Activated CD4-positive, alpha-beta T cell treated with anti-CD3 and anti-CD28 coated beads for 36 hours (primary cell): ENCODE measurements at regions of chr19 and their contacts with region 1.

Region 1: GRCh38 chr19:20565321-20566018 is at the start of gene ZNF737:
- DNase-seq: peak; percentile 97
- ATAC-seq: peak; percentile 97
- H3K4me3 Mint-ChIP-seq: peak within 1 kb of the TSS; percentile 98
- H3K27ac Mint-ChIP-seq: peak within 1 kb of the TSS; percentile 98
- H3K4me1 Mint-ChIP-seq: peaks cover 19% of the 10 kb centered on the region
- H3K27me3 Mint-ChIP-seq: no peaks in the 10 kb centered on the region
- total RNA-seq, gene ZNF737: 13.9 to 16.4 TPM

Region 2: GRCh38 chr19:20423381-20424197 is 141.9 kb before region 1 on chr19:
- CTCF ChIA-PET with region 1: no interaction called
- POLR2A ChIA-PET with region 1: interaction called, 9 read pairs
- intact Hi-C with region 1: loop called (anchors 1 kb)
- DNase-seq: peak; percentile 61
- ATAC-seq: no peak
- H3K4me3 Mint-ChIP-seq: peak overlapping the region; percentile 96
- H3K27ac Mint-ChIP-seq: peak overlapping the region; percentile 99
- H3K4me1 Mint-ChIP-seq: peaks cover 9% of the 10 kb centered on the region
- H3K27me3 Mint-ChIP-seq: no peaks in the 10 kb centered on the region

Region 3: DNA sequence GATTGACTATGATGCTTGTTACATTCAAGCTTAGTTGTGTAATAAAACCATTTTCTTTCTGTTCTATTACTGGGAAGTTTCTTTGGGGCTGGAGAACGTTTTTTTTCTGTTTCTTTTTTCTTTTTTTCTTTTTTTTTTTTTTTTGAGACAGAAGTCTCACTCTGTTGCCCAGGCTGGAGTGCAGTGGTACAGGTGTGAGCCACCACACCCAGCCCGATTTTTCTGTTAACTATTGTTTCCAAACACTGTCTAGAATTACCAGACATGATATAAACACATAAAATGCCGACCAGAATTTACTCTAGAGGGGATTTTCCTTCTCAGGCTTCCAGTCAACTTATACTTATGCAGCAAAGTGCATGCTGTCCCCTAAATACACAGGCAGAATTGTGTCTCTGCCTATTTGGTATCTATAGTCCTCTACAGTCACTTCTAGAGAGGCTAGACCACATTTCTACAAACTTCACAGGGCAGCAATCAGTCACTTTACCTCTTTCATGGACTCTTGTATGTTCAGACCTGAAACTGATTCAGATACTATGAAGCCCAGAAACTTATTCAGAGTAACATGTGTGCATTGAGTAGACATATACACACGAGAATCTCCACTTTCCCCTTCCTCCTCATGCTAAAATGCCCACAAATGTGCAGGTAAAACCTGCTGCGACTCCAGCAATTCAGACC is 121.1 kb before region 1 on chr19:
- CTCF ChIA-PET with region 1: no interaction called
- POLR2A ChIA-PET with region 1: interaction called, 14 read pairs
- intact Hi-C with region 1: no loop called
- DNase-seq: no peak
- ATAC-seq: peak; percentile 63
- H3K4me3 Mint-ChIP-seq: no peak overlapping the region
- H3K27ac Mint-ChIP-seq: no peak overlapping the region
- H3K4me1 Mint-ChIP-seq: peaks cover 8% of the 10 kb centered on the region
- H3K27me3 Mint-ChIP-seq: no peaks in the 10 kb centered on the region

Region 4: GRCh38 chr19:20923077-20923871 is 357.8 kb after region 1 on chr19 and contains the start of gene ZNF85:
- CTCF ChIA-PET with region 1: no interaction called
- POLR2A ChIA-PET with region 1: interaction called, 11 read pairs
- intact Hi-C with region 1: loop called in 1 of 2 experiments (anchors 5 kb)
- DNase-seq: peak; percentile 95
- ATAC-seq: peak; percentile 99
- H3K4me3 Mint-ChIP-seq: peak within 1 kb of the TSS; percentile 91
- H3K27ac Mint-ChIP-seq: peak within 1 kb of the TSS; percentile 96
- H3K4me1 Mint-ChIP-seq: peaks cover 25% of the 10 kb centered on the region
- H3K27me3 Mint-ChIP-seq: no peaks in the 10 kb centered on the region
- total RNA-seq, gene ZNF85: 23.2 to 29.3 TPM

Region 5: DNA sequence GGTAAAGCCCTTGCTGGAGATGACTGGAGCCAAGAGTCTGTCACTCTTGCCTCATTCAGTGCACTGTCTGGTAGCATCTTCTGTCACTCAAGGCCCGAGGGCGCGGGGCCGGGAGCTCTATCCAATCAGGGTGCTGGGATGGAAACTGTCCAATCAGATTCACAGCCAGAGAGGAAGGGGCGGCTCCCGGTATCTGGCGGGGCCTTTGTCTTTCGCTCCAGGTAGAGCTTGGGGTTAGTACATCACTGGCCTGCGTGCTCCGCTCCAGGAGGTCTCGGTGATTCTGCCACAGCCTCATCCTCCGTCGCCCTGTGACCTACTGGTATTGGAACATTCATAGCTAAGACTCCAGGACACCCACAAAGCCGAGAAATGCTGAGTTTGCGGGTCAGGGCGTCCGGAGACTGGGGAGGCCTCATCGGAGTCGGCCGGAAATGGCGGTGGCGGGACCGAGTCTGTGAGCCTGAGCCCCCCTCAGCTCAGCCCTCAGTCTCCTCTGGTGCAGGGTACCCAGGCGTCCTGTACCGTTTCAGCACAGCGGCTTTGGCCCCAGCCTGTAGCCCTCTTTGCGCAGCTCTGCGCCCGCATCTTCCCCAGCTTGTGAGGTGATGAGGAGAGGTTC is 434.4 kb after region 1 on chr19:
- CTCF ChIA-PET with region 1: interaction called, 3 read pairs
- POLR2A ChIA-PET with region 1: no interaction called
- intact Hi-C with region 1: loop called in 1 of 2 experiments (anchors 1 kb)
- DNase-seq: peak; percentile 95
- ATAC-seq: peak; percentile 100
- H3K4me3 Mint-ChIP-seq: peak overlapping the region; percentile 89
- H3K27ac Mint-ChIP-seq: peak overlapping the region; percentile 91
- H3K4me1 Mint-ChIP-seq: peaks cover 9% of the 10 kb centered on the region
- H3K27me3 Mint-ChIP-seq: no peaks in the 10 kb centered on the region